H1 (cell line): ENCODE measurements at regions of chr3 and their contacts with region 1.

Region 1: DNA sequence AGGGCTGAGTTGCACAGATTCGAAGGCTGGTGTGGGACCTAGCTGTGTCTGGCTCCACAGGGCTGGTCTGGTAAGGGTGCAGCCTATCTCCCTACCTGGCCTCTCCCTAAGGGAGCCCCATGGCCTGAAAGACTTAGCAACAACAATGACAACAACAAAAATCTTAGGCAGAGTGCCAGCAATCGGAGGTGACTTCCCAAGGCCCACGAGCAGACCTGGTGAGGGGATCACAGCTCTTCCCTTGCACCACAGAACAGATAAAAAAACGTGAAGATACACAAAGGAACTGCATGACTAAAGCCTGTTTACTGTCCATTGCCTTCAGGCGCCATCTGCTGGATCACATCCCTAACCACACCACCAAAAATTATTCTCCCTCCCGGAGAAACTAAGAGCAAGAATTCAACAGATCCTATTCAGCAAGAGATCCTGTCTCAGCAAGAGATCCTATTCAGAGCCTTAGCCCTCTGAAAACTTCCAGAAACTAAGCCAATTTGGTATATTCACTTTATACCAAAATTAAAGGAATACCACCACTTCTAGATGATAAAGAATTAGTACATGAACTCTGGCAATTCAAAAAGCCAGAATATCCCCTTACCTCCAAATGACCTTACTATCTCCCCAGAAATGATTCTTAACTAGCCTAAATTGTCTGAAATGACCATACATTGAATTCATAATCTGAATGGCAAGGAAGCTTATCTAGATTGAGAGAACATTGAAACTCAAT is 24.1 kb upstream of the OR5K4 start:
- DNase-seq: peak in 1 of 2 experiments; percentile 71
- H3K4me3 ChIP-seq: no peak overlapping the region
- H3K27ac ChIP-seq: 0 out of 2 replicates have a peak overlapping the region, but pooled peaks have one; percentile 48
- H3K4me1 ChIP-seq: peaks cover 9 to 24% (median 14%) of the 10 kb centered on the region in 4 experiments
- H3K27me3 ChIP-seq: no peaks in the 10 kb centered on the region
- CTCF ChIP-seq: peak; percentile 15 to 91 (median 87)
- EP300 ChIP-seq: no peak
- POLR2A ChIP-seq: no peak
- RAD21 ChIP-seq: peak; percentile 95 to 96

Region 2: GRCh38 chr3:98022978-98023820 is 306.4 kb before region 1 on chr3:
- CTCF ChIA-PET with region 1: interaction called, 10 read pairs
- POLR2A ChIA-PET with region 1: no interaction called
- DNase-seq: peak; percentile 71 to 99
- H3K4me3 ChIP-seq: no peak overlapping the region
- H3K27ac ChIP-seq: no peak overlapping the region
- H3K4me1 ChIP-seq: no peaks in the 10 kb centered on the region
- H3K27me3 ChIP-seq: no peaks in the 10 kb centered on the region
- CTCF ChIP-seq: peak; percentile 74 to 91 (median 83)
- EP300 ChIP-seq: no peak
- POLR2A ChIP-seq: no peak
- RAD21 ChIP-seq: peak; percentile 95 to 96

Region 3: GRCh38 chr3:98048586-98048985 is 281.0 kb before region 1 on chr3:
- CTCF ChIA-PET with region 1: interaction called, 32 read pairs
- POLR2A ChIA-PET with region 1: no interaction called
- DNase-seq: no peak
- H3K4me3 ChIP-seq: no peak overlapping the region
- H3K27ac ChIP-seq: no peak overlapping the region
- H3K4me1 ChIP-seq: no peaks in the 10 kb centered on the region
- H3K27me3 ChIP-seq: no peaks in the 10 kb centered on the region
- CTCF ChIP-seq: no peak
- EP300 ChIP-seq: no peak
- POLR2A ChIP-seq: no peak
- RAD21 ChIP-seq: no peak

Region 4: DNA sequence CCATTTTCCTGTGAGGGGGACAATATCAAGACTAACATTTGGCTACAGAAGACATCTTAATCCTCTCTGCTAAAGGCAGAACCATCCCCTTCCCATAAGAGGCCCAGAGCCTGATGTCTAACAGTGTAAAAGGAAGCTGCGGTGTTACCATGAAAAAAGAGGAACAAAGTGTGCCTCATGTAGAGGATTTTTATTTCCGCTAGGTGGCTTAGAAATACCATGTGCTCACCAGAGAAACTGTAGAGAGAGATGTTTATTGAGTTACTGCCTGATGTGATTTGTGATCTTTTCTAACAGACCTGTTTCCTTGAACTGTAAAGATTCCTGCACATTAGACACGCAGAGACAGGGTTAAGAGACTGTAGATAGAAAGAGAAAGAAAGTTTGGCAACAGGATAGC is 141.0 kb before region 1 on chr3:
- CTCF ChIA-PET with region 1: interaction called, 61 read pairs
- POLR2A ChIA-PET with region 1: interaction called, 7 read pairs
- DNase-seq: no peak
- H3K4me3 ChIP-seq: no peak overlapping the region
- H3K27ac ChIP-seq: no peak overlapping the region
- H3K4me1 ChIP-seq: 0 out of 7 replicates have a peak, but pooled peaks cover 0 to 2% (median 0%) of the 10 kb centered on the region in 4 experiments
- H3K27me3 ChIP-seq: no peaks in the 10 kb centered on the region
- CTCF ChIP-seq: peak in 2 of 3 experiments; percentile 49 to 52; a peak in 3 of 4 replicates
- EP300 ChIP-seq: no peak
- POLR2A ChIP-seq: no peak
- RAD21 ChIP-seq: peak; percentile 55 to 57

Region 5: DNA sequence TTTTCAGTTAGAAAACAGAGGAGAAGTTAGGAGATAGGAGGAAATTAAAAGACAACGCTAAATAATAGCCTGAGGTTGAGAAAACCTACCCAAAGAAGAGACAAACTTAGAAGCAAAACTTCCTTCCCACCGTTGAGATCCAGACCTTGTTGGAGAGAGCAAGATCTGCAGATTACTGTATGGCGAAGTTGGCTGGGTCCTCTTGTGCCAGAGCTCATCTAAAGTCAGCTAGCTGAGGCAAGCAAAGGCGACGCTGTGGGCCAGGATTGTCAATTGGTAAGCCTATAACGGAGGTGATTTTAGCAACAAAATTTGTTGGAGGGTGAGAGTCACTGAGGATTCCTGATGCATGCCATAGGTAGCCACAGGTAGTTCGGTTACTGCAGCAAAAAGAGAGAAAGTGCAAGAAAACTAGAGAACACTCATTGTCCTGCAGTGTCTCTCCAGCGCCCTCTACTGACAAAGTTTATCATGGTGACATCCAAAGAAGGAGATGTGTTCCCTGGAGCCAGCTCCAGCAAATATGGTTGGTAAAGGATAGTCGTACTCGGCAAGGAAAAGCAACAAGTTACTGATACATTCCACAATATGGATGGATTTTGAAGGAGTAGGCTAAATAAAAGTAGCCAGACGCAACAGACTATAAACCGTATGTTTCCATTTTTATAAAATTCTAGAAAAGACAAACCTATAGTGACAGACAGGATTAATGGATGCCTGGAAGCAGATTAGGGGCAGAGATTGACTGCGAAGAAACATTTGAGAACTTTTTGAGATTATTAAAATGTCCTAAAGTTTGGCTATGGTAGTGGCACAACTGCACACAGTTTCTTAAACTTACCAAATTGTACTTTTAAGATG is 14.3 kb after region 1 on chr3:
- CTCF ChIA-PET with region 1: interaction called, 24 read pairs
- POLR2A ChIA-PET with region 1: interaction called, 16 read pairs
- DNase-seq: peak in 1 of 2 experiments; percentile 76
- H3K4me3 ChIP-seq: no peak overlapping the region
- H3K27ac ChIP-seq: no peak overlapping the region
- H3K4me1 ChIP-seq: no peaks in the 10 kb centered on the region
- H3K27me3 ChIP-seq: no peaks in the 10 kb centered on the region
- CTCF ChIP-seq: peak in 2 of 3 experiments; percentile 80 to 90; a peak in 3 of 4 replicates
- EP300 ChIP-seq: no peak
- POLR2A ChIP-seq: no peak
- RAD21 ChIP-seq: peak; percentile 86 to 89

Region 6: GRCh38 chr3:98376631-98377030 is 47.1 kb after region 1 on chr3:
- CTCF ChIA-PET with region 1: no interaction called
- POLR2A ChIA-PET with region 1: no interaction called
- DNase-seq: no peak
- H3K4me3 ChIP-seq: no peak overlapping the region
- H3K27ac ChIP-seq: no peak overlapping the region
- H3K4me1 ChIP-seq: no peaks in the 10 kb centered on the region
- H3K27me3 ChIP-seq: no peaks in the 10 kb centered on the region
- CTCF ChIP-seq: no peak
- EP300 ChIP-seq: no peak
- POLR2A ChIP-seq: no peak
- RAD21 ChIP-seq: no peak

Region 7: DNA sequence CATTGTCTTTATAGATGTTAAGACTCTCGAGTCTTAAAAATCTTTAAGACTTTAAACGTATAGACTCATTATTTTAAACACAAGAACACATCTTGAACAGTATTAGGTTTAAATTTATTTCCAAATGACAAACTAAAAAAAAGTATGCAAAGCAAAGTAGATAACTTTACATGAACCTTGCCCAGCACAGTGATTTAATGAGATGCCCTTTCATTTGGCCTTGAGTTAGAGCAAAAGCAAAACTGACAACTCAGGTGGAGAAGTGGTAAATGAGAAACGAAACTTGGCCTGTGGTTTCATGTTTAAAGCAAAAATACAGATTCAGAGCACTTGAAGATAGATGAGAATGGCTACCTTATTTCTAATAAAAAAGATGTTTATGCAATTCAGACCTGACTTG is 210.8 kb after region 1 on chr3:
- CTCF ChIA-PET with region 1: no interaction called
- POLR2A ChIA-PET with region 1: no interaction called
- DNase-seq: no peak
- H3K4me3 ChIP-seq: no peak overlapping the region
- H3K27ac ChIP-seq: no peak overlapping the region
- H3K4me1 ChIP-seq: peaks cover 0 to 2% (median 0%) of the 10 kb centered on the region in 4 experiments; a peak in 1 of 7 replicates
- H3K27me3 ChIP-seq: peaks cover 0 to 1% (median 0%) of the 10 kb centered on the region in 4 experiments; a peak in 1 of 7 replicates
- CTCF ChIP-seq: no peak
- EP300 ChIP-seq: no peak
- POLR2A ChIP-seq: no peak
- RAD21 ChIP-seq: no peak